IMR-90 (cell line): ENCODE measurements at regions of chr5 and their contacts with region 1.

Region 1: GRCh38 chr5:100213483-100213882 is 321.7 kb upstream of the FAM174A start:
- DNase-seq: no peak
- ATAC-seq: no peak
- H3K4me3 ChIP-seq: no peak overlapping the region
- H3K27ac ChIP-seq: no peak overlapping the region
- H3K4me1 ChIP-seq: no peaks in the 10 kb centered on the region
- H3K27me3 ChIP-seq: no peaks in the 10 kb centered on the region
- CTCF ChIP-seq: no peak
- POLR2A ChIP-seq: no peak
- RAD21 ChIP-seq: no peak

Region 2: DNA sequence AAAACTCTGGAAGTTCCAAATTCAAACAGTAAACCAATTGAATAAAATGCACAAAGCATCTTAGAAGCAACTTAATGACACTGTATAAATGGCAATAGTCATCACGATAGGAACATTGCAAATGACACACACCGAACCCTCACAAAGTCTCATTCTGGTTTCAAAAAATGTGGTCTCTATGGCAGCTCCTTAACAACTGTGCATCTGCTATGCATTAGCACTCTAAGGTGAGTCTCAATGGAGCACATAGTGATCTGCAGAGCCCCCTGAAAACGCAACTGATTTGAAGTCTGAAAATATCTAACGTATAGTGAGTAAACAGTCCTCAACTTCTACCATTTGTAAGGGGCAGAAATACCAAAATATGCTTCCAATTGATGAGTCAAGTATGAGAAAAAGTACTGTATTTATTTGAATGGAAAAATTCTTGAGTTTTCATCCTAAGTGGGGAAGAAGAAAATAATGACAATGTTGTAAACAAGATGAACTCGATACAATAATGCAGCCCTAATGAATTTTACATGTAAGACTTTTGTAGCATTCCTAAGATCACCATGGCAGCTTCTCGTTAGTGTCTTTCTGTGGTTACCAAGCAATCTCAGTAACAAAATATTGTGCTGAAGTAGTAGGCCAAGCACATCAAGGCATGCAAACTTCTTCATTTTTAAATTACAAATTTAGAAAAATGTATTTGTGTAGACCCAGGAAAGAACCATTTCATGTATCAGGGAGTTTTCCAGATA is 195.8 kb before region 1 on chr5:
- CTCF ChIA-PET with region 1: no interaction called
- POLR2A ChIA-PET with region 1: no interaction called
- dilution Hi-C with region 1: no loop called
- in situ Hi-C with region 1: no loop called
- intact Hi-C with region 1: no loop called
- DNase-seq: no peak
- ATAC-seq: no peak
- H3K4me3 ChIP-seq: no peak overlapping the region
- H3K27ac ChIP-seq: no peak overlapping the region
- H3K4me1 ChIP-seq: no peaks in the 10 kb centered on the region
- H3K27me3 ChIP-seq: no peaks in the 10 kb centered on the region
- CTCF ChIP-seq: no peak
- POLR2A ChIP-seq: no peak
- RAD21 ChIP-seq: no peak

Region 3: GRCh38 chr5:100131161-100131560 is 82.3 kb before region 1 on chr5:
- CTCF ChIA-PET with region 1: no interaction called
- POLR2A ChIA-PET with region 1: interaction called, 17 read pairs
- dilution Hi-C with region 1: no loop called
- in situ Hi-C with region 1: no loop called
- intact Hi-C with region 1: no loop called
- DNase-seq: no peak
- ATAC-seq: no peak
- H3K4me3 ChIP-seq: no peak overlapping the region
- H3K27ac ChIP-seq: no peak overlapping the region
- H3K4me1 ChIP-seq: no peaks in the 10 kb centered on the region
- H3K27me3 ChIP-seq: no peaks in the 10 kb centered on the region
- CTCF ChIP-seq: no peak
- POLR2A ChIP-seq: no peak
- RAD21 ChIP-seq: no peak

Region 4: GRCh38 chr5:100252037-100252436 is 38.6 kb after region 1 on chr5:
- CTCF ChIA-PET with region 1: no interaction called
- POLR2A ChIA-PET with region 1: no interaction called
- dilution Hi-C with region 1: no loop called
- in situ Hi-C with region 1: no loop called
- intact Hi-C with region 1: no loop called
- DNase-seq: no peak
- ATAC-seq: no peak
- H3K4me3 ChIP-seq: no peak overlapping the region
- H3K27ac ChIP-seq: no peak overlapping the region
- H3K4me1 ChIP-seq: no peaks in the 10 kb centered on the region
- H3K27me3 ChIP-seq: no peaks in the 10 kb centered on the region
- CTCF ChIP-seq: no peak
- POLR2A ChIP-seq: no peak
- RAD21 ChIP-seq: no peak